Activated CD8-positive, alpha-beta T cell treated with anti-CD3 and anti-CD28 coated beads, Interleukin-2, amount 10 ng/mL, durations not matched to agents 7 days and 5 days (primary cell): ENCODE measurements at regions of chr6 and their contacts with region 1.

Region 1: GRCh38 chr6:53734473-53735299 is 60.1 kb upstream of the LRRC1 start:
- DNase-seq: peak; percentile 67
- ATAC-seq: peak; percentile 59
- H3K4me3 Mint-ChIP-seq: peak overlapping the region; percentile 43
- H3K27ac Mint-ChIP-seq: peak overlapping the region; percentile 58
- H3K4me1 Mint-ChIP-seq: peaks cover 59% of the 10 kb centered on the region
- H3K27me3 Mint-ChIP-seq: no peaks in the 10 kb centered on the region

Region 2: DNA sequence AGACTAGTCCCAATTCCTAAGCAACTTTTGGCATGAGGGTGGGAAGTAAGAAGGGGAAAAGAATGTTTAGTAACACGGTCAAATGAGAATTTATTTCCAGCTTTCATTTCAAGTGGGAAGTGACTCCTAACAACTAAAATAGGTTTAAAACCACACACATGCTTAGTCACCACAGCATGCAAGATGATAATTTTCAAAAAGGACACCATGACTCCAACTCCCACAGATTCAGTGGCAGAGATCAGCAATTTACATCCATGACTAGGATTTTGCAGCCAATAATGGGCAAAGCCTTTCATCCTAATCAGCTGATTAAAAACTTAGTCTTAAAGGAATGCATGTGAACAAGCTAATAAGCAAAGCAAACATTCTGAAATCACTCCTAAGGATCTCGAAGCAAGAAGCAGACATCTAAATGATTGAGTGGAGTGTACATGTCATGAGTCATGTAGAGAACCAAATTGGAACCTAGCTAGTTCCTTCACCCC is 141.6 kb before region 1 on chr6:
- CTCF ChIA-PET with region 1: no interaction called
- POLR2A ChIA-PET with region 1: no interaction called
- DNase-seq: no peak
- ATAC-seq: no peak
- H3K4me3 Mint-ChIP-seq: no peak overlapping the region
- H3K27ac Mint-ChIP-seq: no peak overlapping the region
- H3K4me1 Mint-ChIP-seq: no peaks in the 10 kb centered on the region
- H3K27me3 Mint-ChIP-seq: peaks cover 9% of the 10 kb centered on the region

Region 3: GRCh38 chr6:53794720-53795253 is 60.1 kb after region 1 on chr6 and contains the start of gene LRRC1:
- CTCF ChIA-PET with region 1: interaction called, 31 read pairs
- POLR2A ChIA-PET with region 1: no interaction called
- DNase-seq: peak; percentile 89
- ATAC-seq: peak; percentile 78
- H3K4me3 Mint-ChIP-seq: peak within 1 kb of the TSS; percentile 98
- H3K27ac Mint-ChIP-seq: peak within 1 kb of the TSS; percentile 86
- H3K4me1 Mint-ChIP-seq: peaks cover 27% of the 10 kb centered on the region
- H3K27me3 Mint-ChIP-seq: peaks cover 45% of the 10 kb centered on the region
- total RNA-seq, gene LRRC1: 3.6 to 4.2 TPM

Region 4: GRCh38 chr6:53956068-53956711 is 221.5 kb after region 1 on chr6:
- CTCF ChIA-PET with region 1: interaction called, 11 read pairs
- POLR2A ChIA-PET with region 1: no interaction called
- DNase-seq: peak; percentile 35
- ATAC-seq: no peak
- H3K4me3 Mint-ChIP-seq: no peak overlapping the region
- H3K27ac Mint-ChIP-seq: no peak overlapping the region
- H3K4me1 Mint-ChIP-seq: no peaks in the 10 kb centered on the region
- H3K27me3 Mint-ChIP-seq: peaks cover 15% of the 10 kb centered on the region